ENCODE measurements at regions of chr1 and their contacts with region 1.

Region 1: GRCh38 chr1:45518910-45519309 is 2.8 kb downstream of the PRDX1 start:
- DNase-seq: peak; percentile 30
- H3K4me3 ChIP-seq: no peak overlapping the region
- H3K27ac ChIP-seq: peak overlapping the region in 3 of 4 donors; percentile 7 to 34 (median 12)
- H3K4me1 ChIP-seq: peaks cover 17 to 52% (median 39%) of the 10 kb centered on the region in 4 donors
- H3K27me3 ChIP-seq: no peaks in the 10 kb centered on the region
- CTCF ChIP-seq: no peak
- EP300 ChIP-seq: no peak
- POLR2A ChIP-seq: no peak

Region 2: GRCh38 chr1:45410850-45411314 is 108.0 kb before region 1 on chr1:
- in situ Hi-C with region 1: no loop called
- intact Hi-C with region 1: no loop called
- DNase-seq: no peak
- H3K4me3 ChIP-seq: no peak overlapping the region
- H3K27ac ChIP-seq: no peak overlapping the region
- H3K4me1 ChIP-seq: peaks cover 0 to 3% (median 0%) of the 10 kb centered on the region in 4 donors
- H3K27me3 ChIP-seq: no peaks in the 10 kb centered on the region
- CTCF ChIP-seq: no peak
- EP300 ChIP-seq: no peak
- POLR2A ChIP-seq: no peak

Region 3: DNA sequence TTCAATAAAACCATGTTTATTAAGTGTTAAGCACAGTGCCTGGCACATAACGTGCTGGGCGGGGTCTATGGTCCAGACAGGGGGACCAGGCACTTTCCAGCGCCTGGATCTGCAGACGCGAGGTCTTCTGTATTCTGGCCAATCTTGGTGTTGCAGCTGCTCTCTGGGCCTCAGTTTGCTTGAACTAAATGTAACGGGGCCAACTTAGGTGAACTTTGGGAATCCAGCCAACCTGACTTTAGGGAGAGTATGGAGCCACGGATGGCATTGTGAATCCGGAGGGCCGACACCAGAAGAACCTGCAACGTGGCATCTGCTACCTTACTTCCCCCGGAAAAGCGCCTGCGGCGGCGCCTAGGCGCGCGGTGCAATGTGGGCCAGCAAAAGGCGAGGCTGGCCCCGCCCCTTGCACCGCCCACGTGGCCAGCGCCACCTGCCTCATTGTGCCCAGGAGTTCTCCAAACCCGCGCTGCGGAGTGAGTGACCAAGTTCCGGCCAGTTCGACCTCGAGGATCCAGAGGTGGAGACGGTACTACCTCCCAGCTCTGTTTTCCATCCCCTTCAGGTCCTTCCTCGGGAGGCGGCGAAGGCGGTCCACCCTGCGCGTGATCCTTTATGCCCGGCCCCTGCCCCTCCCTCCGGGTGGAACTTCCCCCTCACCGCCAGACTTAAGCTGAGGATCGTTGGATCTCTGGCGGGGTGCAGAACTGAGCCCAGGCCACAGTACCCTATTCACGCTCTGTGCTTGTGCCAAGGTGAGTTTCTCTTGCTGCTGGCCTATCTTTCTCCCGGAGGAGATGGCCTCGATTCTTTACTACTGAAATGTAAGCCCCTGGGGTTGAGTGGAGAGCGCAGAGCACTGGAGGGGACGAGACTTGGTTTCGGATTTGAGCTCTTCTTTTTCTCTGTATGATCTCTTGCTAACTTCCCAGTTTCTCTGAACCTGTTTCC is 31.8 kb after region 1 on chr1 and contains the start of gene AKR1A1:
- in situ Hi-C with region 1: no loop called
- intact Hi-C with region 1: loop called (anchors 5 kb)
- DNase-seq: peak; percentile 92
- H3K4me3 ChIP-seq: peak within 1 kb of the TSS; percentile 60 to 89 (median 66)
- H3K27ac ChIP-seq: peak within 1 kb of the TSS; percentile 87 to 89 (median 88)
- H3K4me1 ChIP-seq: peaks cover 17 to 36% (median 23%) of the 10 kb centered on the region in 4 donors
- H3K27me3 ChIP-seq: no peaks in the 10 kb centered on the region
- CTCF ChIP-seq: no peak
- EP300 ChIP-seq: no peak
- POLR2A ChIP-seq: peak; percentile 77
- total RNA-seq, gene AKR1A1: 86.5 to 158 (median 128) TPM

Region 4: DNA sequence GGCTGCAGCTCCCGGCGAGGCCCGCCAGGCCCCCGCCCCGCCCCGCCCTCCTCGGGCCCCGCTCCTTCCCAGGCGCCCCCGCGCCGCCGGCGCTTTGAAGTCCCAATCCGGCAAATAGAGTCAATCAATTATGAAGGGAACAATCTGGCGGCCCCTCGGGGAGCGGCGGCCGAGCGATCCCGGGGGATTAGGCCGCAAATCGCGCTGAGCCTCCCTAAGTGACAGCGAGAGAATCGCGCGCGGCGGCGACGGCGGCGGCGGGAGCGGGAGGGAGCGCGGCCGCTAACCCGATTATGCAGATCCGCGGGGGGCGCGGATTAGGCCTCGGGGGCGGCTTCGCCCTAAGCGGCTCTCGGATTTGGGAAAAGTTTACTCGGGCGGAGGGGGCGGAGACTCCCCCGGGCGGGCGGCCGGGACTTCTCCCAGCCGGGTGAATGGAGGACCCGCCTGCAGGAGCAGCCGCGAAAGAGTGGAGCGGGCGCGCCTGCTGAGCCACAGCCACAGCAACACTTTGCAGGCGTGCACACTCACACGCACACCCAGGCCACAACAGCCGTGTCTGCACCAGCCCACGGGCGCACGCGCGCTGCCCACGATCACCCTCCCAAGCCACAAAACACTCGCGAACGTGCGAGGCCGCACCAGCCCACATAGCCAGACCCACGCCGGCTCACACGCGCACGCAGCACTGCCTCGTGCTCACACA is 947.7 kb after region 1 on chr1:
- in situ Hi-C with region 1: no loop called
- intact Hi-C with region 1: no loop called
- DNase-seq: no peak
- H3K4me3 ChIP-seq: peak overlapping the region; percentile 39 to 67 (median 54)
- H3K27ac ChIP-seq: no peak overlapping the region
- H3K4me1 ChIP-seq: peaks cover 5 to 11% (median 9%) of the 10 kb centered on the region in 4 donors
- H3K27me3 ChIP-seq: peaks cover 49% of the 10 kb centered on the region
- CTCF ChIP-seq: no peak
- EP300 ChIP-seq: no peak
- POLR2A ChIP-seq: no peak

Measured in transverse colon (tissue), 4 donors.